Psoas muscle (tissue), 8 donors: ENCODE measurements at regions of chr1 and their contacts with region 1.

Region 1: GRCh38 chr1:178532392-178532791 is 19.5 kb downstream of the TEX35 start:
- DNase-seq: peak; percentile 84 to 88
- ATAC-seq: peak; percentile 44 to 70 (median 57)
- H3K4me3 ChIP-seq: no peak overlapping the region
- H3K27ac ChIP-seq: no peak overlapping the region
- H3K4me1 ChIP-seq: peaks cover 3% of the 10 kb centered on the region
- H3K27me3 ChIP-seq: no peaks in the 10 kb centered on the region
- CTCF ChIP-seq: peak; percentile 88

Region 2: GRCh38 chr1:178684542-178685000 is 152.2 kb after region 1 on chr1:
- intact Hi-C with region 1: no loop called
- DNase-seq: no peak
- ATAC-seq: peak; percentile 25 to 53 (median 38)
- H3K4me3 ChIP-seq: no peak overlapping the region
- H3K27ac ChIP-seq: no peak overlapping the region
- H3K4me1 ChIP-seq: no peaks in the 10 kb centered on the region
- H3K27me3 ChIP-seq: no peaks in the 10 kb centered on the region
- CTCF ChIP-seq: no peak

Region 3: DNA sequence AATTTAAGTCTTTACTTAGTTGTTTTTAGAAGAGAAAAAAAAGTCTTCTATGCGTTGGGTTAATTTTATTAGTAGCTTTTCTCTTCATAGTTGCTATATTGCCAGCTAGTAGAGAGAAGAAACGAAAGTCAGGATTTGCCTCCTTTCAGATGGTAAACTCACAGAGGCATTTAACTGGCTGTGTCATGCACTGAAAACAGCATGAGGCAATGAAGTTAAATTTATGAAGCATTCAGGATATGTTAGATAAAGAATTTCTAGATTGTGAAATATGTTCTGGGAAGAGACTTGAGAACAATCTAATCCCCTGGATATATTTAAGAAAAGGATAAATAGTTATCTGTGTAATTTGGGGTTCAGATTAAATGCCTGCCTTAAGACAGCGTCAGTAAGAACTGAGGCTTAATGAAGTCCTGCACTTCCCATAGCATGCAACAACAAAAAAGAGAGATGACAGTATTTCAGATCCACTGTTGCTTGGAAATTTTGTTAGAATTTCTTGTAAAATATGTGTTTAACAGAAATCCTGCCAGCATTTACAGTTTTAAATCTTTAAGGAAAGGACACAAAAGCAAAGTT is 336.8 kb after region 1 on chr1:
- intact Hi-C with region 1: loop called in 1 of 2 experiments (anchors 10 kb)
- DNase-seq: no peak
- ATAC-seq: peak; percentile 75 to 87 (median 76)
- H3K4me3 ChIP-seq: peak overlapping the region; percentile 72
- H3K27ac ChIP-seq: peak overlapping the region; percentile 74
- H3K4me1 ChIP-seq: peaks cover 15% of the 10 kb centered on the region
- H3K27me3 ChIP-seq: no peaks in the 10 kb centered on the region
- CTCF ChIP-seq: no peak

Region 4: DNA sequence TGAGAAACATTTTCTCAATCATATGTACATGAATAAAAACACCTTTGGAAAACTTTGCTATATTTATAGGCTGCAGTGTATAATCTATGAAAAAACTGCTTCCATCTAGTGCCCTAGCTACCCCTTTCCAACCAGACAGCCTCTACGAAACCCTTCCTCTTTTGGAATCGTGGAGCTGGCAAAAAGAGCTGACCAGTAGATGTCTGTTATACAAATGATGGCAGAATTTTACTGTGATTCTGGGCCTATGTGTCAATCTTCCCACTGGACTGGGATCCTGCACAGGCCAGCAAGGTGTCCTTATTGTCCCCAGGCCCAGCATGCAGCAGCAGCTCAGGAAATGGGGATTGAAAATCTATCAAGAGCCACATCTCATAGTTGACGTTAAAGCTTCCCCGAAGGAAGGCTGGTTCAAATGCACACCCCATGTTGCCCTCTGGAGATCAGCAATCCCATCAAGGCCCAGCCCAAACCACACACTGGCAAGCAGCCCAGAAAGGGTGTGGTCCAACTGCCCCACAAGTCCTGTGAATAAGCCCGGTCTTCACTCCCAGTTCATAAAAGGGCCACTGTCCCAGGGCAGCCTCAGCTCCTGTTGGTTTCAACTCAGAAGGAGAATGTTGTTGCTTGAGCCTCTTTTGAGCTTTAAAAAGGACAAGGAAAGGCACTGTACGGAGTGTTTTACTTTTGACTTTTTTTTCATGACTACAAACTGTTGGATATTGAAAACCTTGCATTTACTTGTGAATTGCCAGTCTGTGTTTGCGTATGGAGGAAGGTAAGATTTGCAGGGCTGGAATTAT is 484.6 kb after region 1 on chr1:
- intact Hi-C with region 1: loop called in 1 of 2 experiments (anchors 5 kb)
- DNase-seq: peak; percentile 84 to 89
- ATAC-seq: peak; percentile 77 to 91 (median 90)
- H3K4me3 ChIP-seq: no peak overlapping the region
- H3K27ac ChIP-seq: peak overlapping the region; percentile 39
- H3K4me1 ChIP-seq: peaks cover 15% of the 10 kb centered on the region
- H3K27me3 ChIP-seq: no peaks in the 10 kb centered on the region
- CTCF ChIP-seq: no peak